Common myeloid progenitor, CD34-positive (primary cell): ENCODE measurements at regions of chr3 and their contacts with region 1.

Region 1: DNA sequence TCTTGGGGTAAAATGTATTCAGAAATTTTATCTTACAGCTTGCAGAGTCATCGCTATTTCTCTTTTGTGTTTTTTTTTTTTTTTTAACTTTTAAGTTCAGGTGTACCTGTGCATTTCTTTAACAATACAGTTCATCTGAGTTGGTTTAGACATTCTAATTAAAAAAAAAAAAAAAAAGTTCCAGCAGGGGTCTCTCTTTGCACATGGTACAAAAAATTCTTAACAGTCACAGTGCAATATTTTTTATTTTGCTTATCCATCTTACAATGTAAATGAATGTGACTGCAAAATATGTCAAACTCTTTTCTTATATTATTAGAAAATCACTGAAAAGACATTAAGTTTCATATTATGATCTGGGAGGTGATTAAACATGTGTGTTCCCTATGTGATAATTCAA is 47.5 kb upstream of the SLC9A9 start:
- DNase-seq: peak; percentile 22 to 53 (median 35)
- H3K4me3 ChIP-seq: no peak overlapping the region
- H3K27ac ChIP-seq: no peak overlapping the region
- H3K4me1 ChIP-seq: peaks cover 0 to 2% (median 0%) of the 10 kb centered on the region in 4 experiments
- H3K27me3 ChIP-seq: peaks cover 0 to 2% (median 0%) of the 10 kb centered on the region in 5 experiments

Region 2: GRCh38 chr3:143951351-143951971 is 55.7 kb after region 1 on chr3:
- CTCF ChIA-PET with region 1: interaction called, 13 read pairs
- POLR2A ChIA-PET with region 1: no interaction called
- DNase-seq: peak; percentile 56 to 69 (median 67)
- H3K4me3 ChIP-seq: no peak overlapping the region
- H3K27ac ChIP-seq: no peak overlapping the region
- H3K4me1 ChIP-seq: peaks cover 0 to 5% (median 0%) of the 10 kb centered on the region in 4 experiments
- H3K27me3 ChIP-seq: no peaks in the 10 kb centered on the region

Region 3: DNA sequence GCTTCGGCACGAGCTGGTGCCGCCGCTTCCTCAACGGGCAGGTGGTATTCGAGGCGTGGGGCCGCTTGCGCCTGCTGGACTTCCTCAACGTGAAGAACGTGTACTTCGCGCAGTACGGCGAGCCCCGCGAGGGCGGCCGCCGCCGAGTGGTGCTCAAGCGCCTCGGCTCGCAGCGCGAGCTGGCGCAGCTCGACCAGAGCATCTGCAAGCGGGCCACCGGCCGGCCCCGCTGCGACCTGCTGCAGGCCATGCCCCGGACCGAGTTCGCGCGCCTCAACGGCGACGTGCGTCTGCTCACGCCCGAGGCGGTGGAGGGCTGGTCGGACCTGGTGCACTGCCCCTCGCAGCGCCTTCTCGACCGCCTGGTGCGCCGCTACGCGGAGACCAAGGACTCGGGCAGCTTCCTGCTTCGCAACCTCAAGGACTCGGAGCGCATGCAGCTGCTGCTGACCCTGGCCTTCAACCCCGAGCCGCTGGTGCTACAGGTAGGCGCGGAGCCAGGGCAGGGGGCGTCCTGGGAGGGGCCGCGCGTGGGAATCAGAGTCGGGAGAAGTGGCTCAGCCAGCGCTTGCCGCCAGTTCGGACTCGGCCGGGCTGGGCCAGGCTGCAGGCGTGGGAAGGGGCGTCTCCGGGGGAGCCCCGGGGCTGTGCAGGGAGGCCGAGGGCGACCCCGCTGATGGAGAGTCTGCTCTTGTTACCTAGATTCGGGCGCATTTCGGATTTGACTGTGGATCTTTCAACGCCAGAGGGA is 76.9 kb after region 1 on chr3:
- CTCF ChIA-PET with region 1: interaction called, 10 read pairs
- POLR2A ChIA-PET with region 1: no interaction called
- DNase-seq: peak in 2 of 3 donors; percentile 78 to 87
- H3K4me3 ChIP-seq: peak overlapping the region; percentile 73 to 98 (median 95)
- H3K27ac ChIP-seq: peak overlapping the region; percentile 52 to 94
- H3K4me1 ChIP-seq: peaks cover 33 to 52% (median 40%) of the 10 kb centered on the region in 4 experiments
- H3K27me3 ChIP-seq: no peaks in the 10 kb centered on the region